Activated naive CD8-positive, alpha-beta T cell treated with anti-CD3 and anti-CD28 coated beads, Interleukin-2, amount 10 ng/mL, durations not matched to agents 7 days and 5 days (primary cell): ENCODE measurements at regions of chr2 and their contacts with region 1.

Region 1: DNA sequence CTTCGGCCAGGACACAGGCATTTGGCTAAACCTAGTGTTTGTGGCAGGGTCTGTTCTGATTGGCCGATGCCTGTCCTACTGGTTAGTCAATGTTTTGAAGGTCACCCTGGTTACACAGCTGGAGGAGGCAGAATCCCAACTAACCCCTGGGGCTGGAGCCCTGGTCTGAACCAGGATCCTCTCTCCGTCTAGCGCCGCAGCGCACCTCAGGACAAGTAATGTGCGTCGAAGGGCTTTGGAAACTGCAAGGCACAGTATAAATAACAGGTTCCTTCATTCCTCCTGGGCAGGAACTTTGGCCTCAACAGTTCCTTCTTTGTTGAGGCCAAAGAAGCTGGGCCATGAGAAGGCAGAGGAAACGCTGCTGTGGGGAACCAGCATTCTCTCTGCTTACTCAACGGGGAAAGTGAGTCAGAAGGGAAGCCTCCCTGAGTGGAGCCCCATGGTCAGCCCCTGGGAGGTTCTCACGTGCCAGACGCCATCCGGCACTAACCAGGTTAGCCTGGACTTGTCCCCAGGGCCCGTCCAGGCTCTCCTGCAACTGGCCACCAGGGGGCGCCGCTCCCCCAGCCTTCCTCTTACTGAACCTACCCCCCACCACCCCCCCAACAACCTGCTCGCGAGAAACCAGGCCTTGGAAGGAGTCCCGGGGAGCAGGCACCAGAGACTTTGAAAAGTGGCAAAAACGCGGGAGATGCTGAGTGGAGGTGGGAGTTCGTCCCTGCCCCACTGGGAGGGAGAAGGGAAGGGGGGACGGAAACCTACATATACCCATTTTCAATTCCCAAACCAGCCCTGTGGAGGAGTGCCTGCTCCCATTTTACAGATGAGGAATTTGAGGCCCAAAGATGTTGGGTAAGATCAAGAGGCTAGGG is 19.8 kb downstream of the TEX44 start:
- DNase-seq: peak; percentile 93
- ATAC-seq: peak; percentile 52
- H3K4me3 Mint-ChIP-seq: peak overlapping the region; percentile 91
- H3K27ac Mint-ChIP-seq: peak overlapping the region; percentile 99
- H3K4me1 Mint-ChIP-seq: peaks cover 29% of the 10 kb centered on the region
- H3K27me3 Mint-ChIP-seq: no peaks in the 10 kb centered on the region

Region 2: GRCh38 chr2:231475965-231476364 is 136.5 kb before region 1 on chr2:
- POLR2A ChIA-PET with region 1: no interaction called
- DNase-seq: no peak
- ATAC-seq: no peak
- H3K4me3 Mint-ChIP-seq: no peak overlapping the region
- H3K27ac Mint-ChIP-seq: no peak overlapping the region
- H3K4me1 Mint-ChIP-seq: peaks cover 8% of the 10 kb centered on the region
- H3K27me3 Mint-ChIP-seq: peaks cover 2% of the 10 kb centered on the region

Region 3: GRCh38 chr2:231627384-231628120 is 15.1 kb after region 1 on chr2:
- POLR2A ChIA-PET with region 1: interaction called, 42 read pairs
- DNase-seq: no peak
- ATAC-seq: peak; percentile 41
- H3K4me3 Mint-ChIP-seq: peak overlapping the region; percentile 80
- H3K27ac Mint-ChIP-seq: peak overlapping the region; percentile 93
- H3K4me1 Mint-ChIP-seq: peaks cover 13% of the 10 kb centered on the region
- H3K27me3 Mint-ChIP-seq: peaks cover 3% of the 10 kb centered on the region

Region 4: GRCh38 chr2:231642631-231643494 is 30.4 kb after region 1 on chr2:
- POLR2A ChIA-PET with region 1: interaction called, 22 read pairs
- DNase-seq: peak; percentile 59
- ATAC-seq: peak; percentile 87
- H3K4me3 Mint-ChIP-seq: peak overlapping the region; percentile 80
- H3K27ac Mint-ChIP-seq: peak overlapping the region; percentile 87
- H3K4me1 Mint-ChIP-seq: peaks cover 11% of the 10 kb centered on the region
- H3K27me3 Mint-ChIP-seq: peaks cover 3% of the 10 kb centered on the region

Region 5: DNA sequence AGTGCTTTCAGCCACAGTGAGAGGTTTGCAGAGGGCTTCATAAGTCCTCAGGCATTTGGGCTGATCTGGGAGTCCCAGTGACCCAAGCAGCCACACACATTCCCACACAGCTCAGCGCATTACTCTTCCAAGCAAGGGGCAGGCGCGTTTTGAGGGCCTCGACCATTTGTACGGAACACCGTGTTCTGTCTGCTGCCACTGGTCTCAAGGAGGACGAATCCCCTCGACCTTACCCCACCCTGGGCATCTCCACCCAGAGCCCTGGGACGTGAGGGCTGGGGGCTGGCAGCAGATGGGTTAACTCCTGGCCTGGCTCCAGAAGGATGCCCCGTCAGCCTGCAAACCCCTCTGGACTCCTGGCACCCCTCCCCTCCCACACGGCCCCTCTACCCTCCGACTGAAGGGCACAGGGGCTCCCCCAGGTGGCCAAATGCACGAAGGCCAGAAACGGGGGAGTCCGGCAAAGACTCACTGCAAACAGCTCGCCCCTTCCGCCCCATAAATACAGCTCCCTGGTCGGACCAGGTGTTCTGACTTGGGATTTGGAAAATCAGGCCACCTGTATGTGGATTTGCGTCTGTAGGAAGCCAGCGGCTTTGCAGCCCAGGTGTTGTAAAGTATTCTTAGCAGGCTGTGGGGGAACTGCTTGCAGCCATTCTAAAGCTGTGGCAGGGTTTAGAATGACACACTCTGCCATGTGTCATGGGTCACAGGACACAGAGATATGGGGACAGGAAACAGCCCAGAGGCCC is 62.3 kb after region 1 on chr2:
- POLR2A ChIA-PET with region 1: interaction called, 93 read pairs
- DNase-seq: peak; percentile 76
- ATAC-seq: peak; percentile 71
- H3K4me3 Mint-ChIP-seq: no peak overlapping the region
- H3K27ac Mint-ChIP-seq: peak overlapping the region; percentile 58
- H3K4me1 Mint-ChIP-seq: peaks cover 13% of the 10 kb centered on the region
- H3K27me3 Mint-ChIP-seq: peaks cover 4% of the 10 kb centered on the region

Region 6: DNA sequence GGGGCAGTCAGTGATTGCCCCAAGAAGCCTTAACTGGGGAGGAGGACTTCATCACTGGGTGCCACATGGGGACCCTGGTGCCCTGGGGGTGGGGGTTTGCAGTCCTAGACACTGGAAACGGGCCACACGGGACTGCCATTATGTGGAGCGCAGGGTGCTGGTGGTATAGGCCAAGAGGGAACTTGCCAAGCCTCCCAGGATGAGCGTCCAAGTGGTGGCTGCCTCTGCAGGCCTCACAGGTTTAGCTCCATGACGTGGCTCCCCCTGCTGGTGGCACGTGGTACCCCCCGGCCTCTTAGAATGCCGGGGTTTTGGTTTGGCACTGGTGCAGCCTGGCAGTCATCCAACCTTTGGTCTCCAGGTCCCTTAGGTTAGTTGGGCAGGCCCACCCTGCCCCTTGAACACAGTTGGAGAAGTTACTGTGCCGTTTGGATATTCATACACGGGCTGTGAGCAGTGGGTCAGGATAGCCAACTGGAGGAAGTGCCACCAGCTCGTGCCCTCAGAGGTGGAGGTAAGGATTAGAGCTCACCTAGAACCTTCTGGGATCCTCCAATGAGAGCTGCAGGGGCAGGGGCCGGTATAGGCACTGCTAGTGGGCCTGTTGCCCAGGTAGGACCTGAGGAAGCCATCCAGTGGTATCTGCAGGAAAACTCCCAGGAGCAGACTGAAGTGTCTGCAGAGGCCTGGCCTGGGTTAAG is 101.5 kb after region 1 on chr2:
- POLR2A ChIA-PET with region 1: interaction called, 92 read pairs
- DNase-seq: peak; percentile 92
- ATAC-seq: peak; percentile 20
- H3K4me3 Mint-ChIP-seq: peak overlapping the region; percentile 57
- H3K27ac Mint-ChIP-seq: peak overlapping the region; percentile 89
- H3K4me1 Mint-ChIP-seq: peaks cover 24% of the 10 kb centered on the region
- H3K27me3 Mint-ChIP-seq: no peaks in the 10 kb centered on the region